CD4-positive, alpha-beta T cell (primary cell): ENCODE measurements at regions of chr16 and their contacts with region 1.

Region 1: GRCh38 chr16:27289669-27290068 is 21.1 kb upstream of the NSMCE1 start:
- DNase-seq: peak in 1 of 14 experiments; percentile 16
- ATAC-seq: peak; percentile 54
- H3K4me3 ChIP-seq: no peak overlapping the region
- H3K4me3 Mint-ChIP-seq: peak overlapping the region; percentile 26
- H3K27ac ChIP-seq: no peak overlapping the region
- H3K27ac Mint-ChIP-seq: peak overlapping the region; percentile 79
- H3K4me1 ChIP-seq: peaks cover 22% of the 10 kb centered on the region
- H3K4me1 Mint-ChIP-seq: peaks cover 52% of the 10 kb centered on the region
- H3K27me3 ChIP-seq: no peaks in the 10 kb centered on the region
- H3K27me3 Mint-ChIP-seq: no peaks in the 10 kb centered on the region
- CTCF ChIP-seq: no peak

Region 2: DNA sequence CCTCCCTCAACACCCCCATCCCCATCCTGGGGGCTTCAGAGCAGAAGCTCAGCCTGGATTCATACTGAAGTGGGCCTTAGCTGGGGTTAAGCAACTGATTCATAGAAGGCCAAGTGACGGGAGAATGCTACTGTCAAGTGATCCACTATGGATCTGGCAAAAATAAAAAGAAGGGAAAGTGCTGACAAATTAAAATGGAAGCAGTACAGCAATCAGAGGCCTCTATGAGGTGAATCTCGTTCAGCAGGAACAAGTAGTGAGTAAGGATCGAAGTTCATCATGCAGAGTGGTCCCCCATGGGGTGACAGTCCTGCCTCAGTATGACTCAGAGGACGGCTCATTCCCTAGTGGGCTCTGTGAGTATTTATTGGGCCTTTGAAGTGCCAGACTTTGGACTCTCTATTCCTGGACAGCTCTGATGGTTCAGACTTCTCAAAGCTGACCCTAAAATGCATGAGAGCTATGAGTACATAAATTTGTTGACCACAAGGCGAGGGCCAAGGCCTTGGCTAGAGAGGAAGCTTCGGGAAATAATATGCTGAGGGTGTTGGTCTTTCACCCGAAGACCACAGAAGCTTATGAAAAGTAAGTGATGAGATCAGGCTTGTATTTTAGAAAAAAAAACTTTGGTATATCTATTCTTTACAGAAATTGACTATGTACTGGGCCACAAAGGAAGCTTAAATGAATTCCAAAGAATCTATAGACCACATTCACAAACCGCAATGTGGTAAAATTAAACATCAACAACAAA is 15.8 kb before region 1 on chr16:
- CTCF ChIA-PET with region 1: interaction called, 3 read pairs
- POLR2A ChIA-PET with region 1: interaction called, 4 read pairs
- intact Hi-C with region 1: loop called in 1 of 2 experiments (anchors 1 kb)
- DNase-seq: peak in 4 of 14 experiments; percentile 28 to 57 (median 50)
- ATAC-seq: peak; percentile 42
- H3K4me3 ChIP-seq: peak overlapping the region; percentile 9
- H3K4me3 Mint-ChIP-seq: peak overlapping the region; percentile 70
- H3K27ac ChIP-seq: no peak overlapping the region
- H3K27ac Mint-ChIP-seq: peak overlapping the region; percentile 77
- H3K4me1 ChIP-seq: peaks cover 38% of the 10 kb centered on the region
- H3K4me1 Mint-ChIP-seq: peaks cover 53% of the 10 kb centered on the region
- H3K27me3 ChIP-seq: no peaks in the 10 kb centered on the region
- H3K27me3 Mint-ChIP-seq: no peaks in the 10 kb centered on the region
- CTCF ChIP-seq: no peak

Region 3: DNA sequence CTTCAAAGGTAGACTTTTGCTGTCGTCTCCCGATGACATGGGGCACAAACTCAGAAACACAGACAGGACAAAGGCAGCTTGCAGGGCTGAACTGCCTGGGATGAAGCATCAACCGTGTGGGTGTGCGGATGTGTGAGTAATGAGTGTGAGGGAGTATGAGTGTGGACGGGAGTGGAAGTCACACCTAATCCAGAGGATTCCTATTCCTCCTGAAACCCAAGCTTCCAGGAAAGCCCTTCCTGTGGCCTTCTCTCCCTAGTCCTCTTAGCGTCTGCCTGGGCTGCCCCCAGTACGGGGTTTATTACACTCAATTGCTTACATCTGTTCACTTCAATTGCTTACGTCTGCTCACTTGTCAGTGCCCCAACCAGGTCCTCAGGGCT is 21.8 kb after region 1 on chr16:
- CTCF ChIA-PET with region 1: no interaction called
- POLR2A ChIA-PET with region 1: no interaction called
- intact Hi-C with region 1: no loop called
- DNase-seq: no peak
- ATAC-seq: no peak
- H3K4me3 ChIP-seq: no peak overlapping the region
- H3K4me3 Mint-ChIP-seq: peak overlapping the region; percentile 73
- H3K27ac ChIP-seq: no peak overlapping the region
- H3K27ac Mint-ChIP-seq: no peak overlapping the region
- H3K4me1 ChIP-seq: peaks cover 34% of the 10 kb centered on the region
- H3K4me1 Mint-ChIP-seq: peaks cover 26% of the 10 kb centered on the region
- H3K27me3 ChIP-seq: no peaks in the 10 kb centered on the region
- H3K27me3 Mint-ChIP-seq: no peaks in the 10 kb centered on the region
- CTCF ChIP-seq: no peak